MCF 10A (cell line): ENCODE measurements at regions of chr7 and their contacts with region 1.

Region 1: GRCh38 chr7:3439333-3440030 is 138.4 kb downstream of the SDK1 start:
- DNase-seq: peak; percentile 95
- H3K4me3 Mint-ChIP-seq: peak overlapping the region; percentile 48
- H3K27ac Mint-ChIP-seq: peak overlapping the region; percentile 70
- H3K4me1 Mint-ChIP-seq: peaks cover 48% of the 10 kb centered on the region
- H3K27me3 Mint-ChIP-seq: no peaks in the 10 kb centered on the region
- CTCF ChIP-seq: no peak

Region 2: DNA sequence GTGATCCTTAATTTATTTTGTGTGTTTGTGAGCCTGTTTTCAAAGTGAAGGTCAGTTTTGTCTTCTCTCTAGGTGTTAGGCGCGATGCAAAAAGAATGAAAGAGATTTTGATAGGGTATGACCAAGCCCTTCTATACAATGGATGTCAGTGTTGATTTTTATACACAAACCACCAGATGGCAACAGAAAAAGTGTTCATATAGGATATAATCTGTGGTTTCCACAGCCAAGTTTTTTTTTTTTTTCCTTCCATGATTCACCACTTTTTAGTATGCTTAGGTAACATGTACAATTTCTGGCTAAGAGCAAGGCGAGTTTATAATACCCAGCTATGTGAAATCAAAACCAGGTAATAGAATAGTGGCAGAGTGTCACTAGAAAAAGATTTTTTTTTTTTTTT is 130.3 kb before region 1 on chr7:
- CTCF ChIA-PET with region 1: interaction called, 3 read pairs
- POLR2A ChIA-PET with region 1: no interaction called
- intact Hi-C with region 1: loop called (anchors 10 kb)
- DNase-seq: peak; percentile 55
- H3K4me3 Mint-ChIP-seq: no peak overlapping the region
- H3K27ac Mint-ChIP-seq: no peak overlapping the region
- H3K4me1 Mint-ChIP-seq: no peaks in the 10 kb centered on the region
- H3K27me3 Mint-ChIP-seq: no peaks in the 10 kb centered on the region
- CTCF ChIP-seq: peak; percentile 20

Region 3: DNA sequence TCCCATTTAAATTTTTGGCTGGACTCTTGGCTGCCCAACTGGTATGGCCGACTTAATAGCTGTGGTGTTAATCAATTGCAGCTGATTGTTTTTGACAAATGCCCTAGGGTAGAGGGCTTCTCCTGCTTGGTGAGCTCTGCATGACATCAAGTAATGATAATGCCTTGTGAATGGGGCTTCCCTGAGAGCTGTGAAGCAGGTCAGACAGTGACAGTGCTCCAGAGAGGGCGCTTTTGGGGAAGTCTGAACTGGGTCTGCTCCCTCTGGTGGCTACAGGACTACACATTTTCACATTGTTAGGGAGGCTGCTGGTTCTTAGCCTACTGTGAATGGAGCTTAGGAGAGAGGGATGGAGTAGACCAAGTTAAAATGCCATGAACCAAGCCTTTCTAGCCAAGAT is 39.6 kb before region 1 on chr7:
- CTCF ChIA-PET with region 1: no interaction called
- POLR2A ChIA-PET with region 1: interaction called, 10 read pairs
- intact Hi-C with region 1: no loop called
- DNase-seq: peak; percentile 47
- H3K4me3 Mint-ChIP-seq: no peak overlapping the region
- H3K27ac Mint-ChIP-seq: no peak overlapping the region
- H3K4me1 Mint-ChIP-seq: peaks cover 7% of the 10 kb centered on the region
- H3K27me3 Mint-ChIP-seq: no peaks in the 10 kb centered on the region
- CTCF ChIP-seq: no peak

Region 4: GRCh38 chr7:3861941-3862340 is 422.5 kb after region 1 on chr7:
- CTCF ChIA-PET with region 1: no interaction called
- POLR2A ChIA-PET with region 1: no interaction called
- intact Hi-C with region 1: no loop called
- DNase-seq: peak; percentile 85
- H3K4me3 Mint-ChIP-seq: peak overlapping the region; percentile 7
- H3K27ac Mint-ChIP-seq: peak overlapping the region; percentile 73
- H3K4me1 Mint-ChIP-seq: peaks cover 19% of the 10 kb centered on the region
- H3K27me3 Mint-ChIP-seq: no peaks in the 10 kb centered on the region
- CTCF ChIP-seq: no peak